Dorsolateral prefrontal cortex (tissue), 120 donors: ENCODE measurements at regions of chr15 and their contacts with region 1.

Region 1: DNA sequence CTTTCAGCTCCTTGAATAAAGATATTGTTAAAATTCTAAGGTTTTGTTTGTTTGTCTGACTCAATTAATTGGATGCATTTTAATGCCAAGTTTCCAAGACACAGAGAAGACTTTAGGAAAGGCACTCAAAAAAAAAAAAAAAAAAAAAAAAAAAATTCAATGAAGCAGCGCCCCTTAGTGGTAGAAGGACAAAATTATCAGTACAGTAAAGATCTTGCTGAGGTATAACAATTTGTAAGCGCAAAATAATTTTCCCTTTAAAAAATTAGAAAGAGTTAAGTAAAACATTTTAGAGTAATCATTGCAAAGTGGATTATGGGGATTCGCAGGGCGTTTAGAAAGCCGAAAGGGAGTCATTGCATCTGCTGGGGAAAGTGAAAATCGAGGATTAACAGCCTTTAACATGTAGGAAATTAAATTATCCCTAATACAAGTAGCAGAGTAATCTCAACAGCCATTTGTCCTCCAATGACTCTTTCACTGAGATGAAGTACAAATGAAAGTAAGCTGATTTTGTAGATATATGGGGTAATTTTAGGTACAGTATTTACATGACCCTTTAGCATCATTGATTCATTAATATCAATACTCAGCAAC is 5.8 kb upstream of the DIS3L start:
- DNase-seq: no peak
- H3K4me3 ChIP-seq: peak overlapping the region in 4 of 59 donors; percentile 4 to 13 (median 7)
- H3K27ac ChIP-seq: no peak overlapping the region
- H3K27me3 ChIP-seq: no peaks in the 10 kb centered on the region
- CTCF ChIP-seq: peak in 55 of 56 donors; percentile 52 to 86 (median 75)

Region 2: DNA sequence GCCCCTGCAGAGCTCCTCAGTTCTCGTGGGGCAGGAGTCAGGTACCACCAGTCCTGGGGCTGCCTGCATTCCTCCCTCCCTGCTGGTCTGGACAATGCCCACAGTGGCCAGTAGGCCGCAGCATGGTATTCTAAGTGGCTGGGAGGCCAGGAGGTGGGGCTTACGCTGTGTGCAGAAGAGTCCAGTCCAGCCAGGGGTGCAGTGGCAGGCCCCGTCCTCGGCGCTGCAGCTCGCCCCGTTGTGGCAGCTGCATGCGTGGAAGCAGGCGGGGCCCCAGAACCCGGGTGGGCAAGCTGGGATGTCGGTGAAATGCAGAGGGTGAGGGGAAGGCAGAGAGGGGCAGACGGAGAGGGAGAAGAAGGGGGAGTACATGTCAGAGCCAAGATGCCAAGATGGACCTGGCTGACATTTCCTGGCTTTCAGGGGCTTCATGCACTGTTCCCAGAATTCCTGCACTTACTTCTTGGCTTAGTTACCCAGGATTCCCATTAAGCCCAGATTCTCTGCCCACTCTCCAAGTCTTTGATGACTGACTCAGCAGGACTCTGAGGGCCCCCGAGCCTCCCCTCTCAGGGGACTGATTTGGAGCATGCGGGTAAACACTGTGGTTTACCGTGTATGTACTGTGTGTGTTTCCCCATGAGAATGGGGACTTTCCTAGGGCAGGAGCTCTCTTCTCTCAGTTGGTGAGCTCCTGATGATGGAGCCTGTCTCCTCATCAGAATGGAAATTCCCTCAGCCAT is 370.7 kb before region 1 on chr15:
- intact Hi-C with region 1: loop called (anchors 5 kb)
- DNase-seq: peak; percentile 58 to 84 (median 76)
- H3K4me3 ChIP-seq: peak overlapping the region in 24 of 59 donors; percentile 4 to 41 (median 27)
- H3K27ac ChIP-seq: peak overlapping the region in 5 of 59 donors; percentile 14 to 29 (median 18)
- H3K27me3 ChIP-seq: no peaks in the 10 kb centered on the region
- CTCF ChIP-seq: peak in 55 of 56 donors; percentile 26 to 92 (median 74)

Region 3: DNA sequence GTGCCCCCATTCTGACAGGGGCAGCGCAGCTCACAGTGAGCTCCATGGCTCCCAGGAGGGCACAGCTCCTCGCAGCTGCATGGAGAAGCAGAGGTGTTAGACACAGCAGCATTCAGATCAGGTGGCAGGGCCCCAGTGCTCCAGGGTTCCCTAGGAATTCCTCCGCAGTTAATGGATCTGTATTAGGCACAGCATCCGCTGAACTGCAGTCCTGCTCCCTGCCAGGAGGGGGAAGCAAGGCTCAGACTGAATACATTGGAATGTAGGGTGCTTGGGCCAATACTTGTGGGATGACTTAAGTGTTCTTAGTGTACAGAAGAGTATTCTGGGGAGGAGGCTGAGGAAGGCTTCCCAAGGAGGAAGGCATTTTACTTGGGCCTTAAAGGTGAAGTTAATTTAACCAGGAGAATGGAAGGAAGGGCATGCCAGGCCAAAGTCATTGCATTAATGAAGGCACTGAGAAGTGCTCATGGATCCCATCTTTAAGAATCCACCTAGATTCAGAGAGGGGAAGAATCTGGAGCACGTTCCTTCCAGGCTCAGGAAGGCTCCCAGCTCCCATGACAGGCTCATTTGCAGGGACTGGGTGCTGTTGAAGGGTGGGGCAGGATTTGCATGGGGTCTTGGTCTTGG is 306.6 kb before region 1 on chr15:
- intact Hi-C with region 1: loop called (anchors 10 kb)
- DNase-seq: peak in 7 of 10 donors; percentile 17 to 76 (median 57)
- H3K4me3 ChIP-seq: no peak overlapping the region
- H3K27ac ChIP-seq: no peak overlapping the region
- H3K27me3 ChIP-seq: peaks cover 0 to 6% (median 0%) of the 10 kb centered on the region in 45 donors
- CTCF ChIP-seq: peak in 53 of 56 donors; percentile 38 to 75 (median 61)

Region 4: DNA sequence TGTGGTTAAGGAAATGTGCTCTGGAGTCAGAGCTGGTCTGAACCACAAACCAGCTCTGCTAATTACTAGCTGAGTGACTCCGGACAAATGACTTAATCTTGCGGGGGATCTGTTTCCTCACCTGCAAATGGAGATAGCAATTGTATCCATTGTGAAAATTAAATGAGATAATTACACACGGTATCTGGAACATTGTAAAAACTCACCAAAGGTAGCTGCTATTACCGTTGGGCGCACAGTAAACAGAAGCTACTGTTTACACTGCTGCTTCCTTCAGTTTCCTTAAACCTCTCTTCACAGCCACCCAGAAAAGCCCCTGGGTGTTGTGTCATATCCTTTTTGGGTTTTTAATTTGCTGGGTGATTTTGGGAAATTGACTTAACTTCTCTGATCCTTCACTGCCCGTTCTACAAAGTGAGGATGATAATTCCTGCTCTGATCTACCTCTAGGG is 141.8 kb before region 1 on chr15:
- intact Hi-C with region 1: loop called in 1 of 2 experiments (anchors 10 kb)
- DNase-seq: no peak
- H3K4me3 ChIP-seq: no peak overlapping the region
- H3K27ac ChIP-seq: no peak overlapping the region
- H3K27me3 ChIP-seq: peaks cover 0 to 3% (median 0%) of the 10 kb centered on the region in 45 donors
- CTCF ChIP-seq: no peak

Region 5: DNA sequence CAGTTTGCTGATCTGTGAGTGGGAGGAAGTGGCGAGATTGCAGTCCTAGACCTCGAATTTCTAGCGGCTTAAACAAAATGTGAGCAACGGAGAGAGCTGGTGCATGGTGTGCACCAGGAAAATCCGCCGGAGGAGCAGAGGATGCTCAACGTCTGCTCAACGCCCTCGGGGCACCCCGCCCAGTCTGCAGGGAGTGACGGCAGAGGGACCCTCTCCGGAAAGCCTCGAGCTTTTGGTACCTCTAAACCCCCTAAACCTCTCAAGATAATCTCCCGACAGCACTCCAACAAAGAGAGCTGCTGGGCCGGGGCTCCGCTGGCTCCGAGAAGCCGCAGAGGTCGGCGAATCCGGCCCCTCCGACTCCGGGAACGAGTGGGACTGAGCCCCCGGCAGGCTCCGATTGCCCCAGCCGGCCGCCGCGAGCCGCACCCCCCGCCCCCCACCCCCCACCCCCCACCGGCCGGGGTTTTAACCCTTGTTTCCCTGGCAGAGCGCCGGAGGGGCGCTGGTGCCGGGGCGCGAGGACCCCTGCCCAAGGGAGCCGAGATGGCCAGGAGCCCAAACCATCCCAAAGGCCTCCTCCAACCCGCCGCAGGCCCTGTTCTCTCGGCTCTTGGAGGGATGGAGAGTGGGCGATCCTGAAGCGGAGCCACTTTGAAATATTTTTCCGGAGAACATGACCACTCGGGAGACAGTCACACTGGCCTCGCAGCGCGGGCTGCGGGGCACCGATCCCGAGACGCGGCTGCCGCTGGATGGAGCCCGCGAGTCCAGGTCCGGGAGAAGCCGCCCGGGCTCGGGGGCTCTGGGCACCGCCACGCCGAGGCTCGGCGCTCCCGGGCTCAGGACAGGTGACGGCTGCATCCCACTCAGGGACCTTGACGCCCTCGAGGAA is 35.5 kb before region 1 on chr15:
- intact Hi-C with region 1: loop called (anchors 2 to 5 kb)
- DNase-seq: peak in 8 of 10 donors; percentile 47 to 83 (median 62)
- H3K4me3 ChIP-seq: peak overlapping the region; percentile 54 to 90 (median 67)
- H3K27ac ChIP-seq: peak overlapping the region in 2 of 59 donors; percentile 21 to 70
- H3K27me3 ChIP-seq: peaks cover 0 to 30% (median 8%) of the 10 kb centered on the region in 45 donors
- CTCF ChIP-seq: peak in 55 of 56 donors; percentile 29 to 78 (median 62)

Region 6: GRCh38 chr15:67048281-67049279 is 761.0 kb after region 1 on chr15:
- intact Hi-C with region 1: no loop called
- DNase-seq: no peak
- H3K4me3 ChIP-seq: no peak overlapping the region
- H3K27ac ChIP-seq: peak overlapping the region in 20 of 59 donors; percentile 2 to 78 (median 49)
- H3K27me3 ChIP-seq: no peaks in the 10 kb centered on the region
- CTCF ChIP-seq: no peak